HEK293T (cell line): ENCODE measurements at regions of chr14 and their contacts with region 1.

Region 1: DNA sequence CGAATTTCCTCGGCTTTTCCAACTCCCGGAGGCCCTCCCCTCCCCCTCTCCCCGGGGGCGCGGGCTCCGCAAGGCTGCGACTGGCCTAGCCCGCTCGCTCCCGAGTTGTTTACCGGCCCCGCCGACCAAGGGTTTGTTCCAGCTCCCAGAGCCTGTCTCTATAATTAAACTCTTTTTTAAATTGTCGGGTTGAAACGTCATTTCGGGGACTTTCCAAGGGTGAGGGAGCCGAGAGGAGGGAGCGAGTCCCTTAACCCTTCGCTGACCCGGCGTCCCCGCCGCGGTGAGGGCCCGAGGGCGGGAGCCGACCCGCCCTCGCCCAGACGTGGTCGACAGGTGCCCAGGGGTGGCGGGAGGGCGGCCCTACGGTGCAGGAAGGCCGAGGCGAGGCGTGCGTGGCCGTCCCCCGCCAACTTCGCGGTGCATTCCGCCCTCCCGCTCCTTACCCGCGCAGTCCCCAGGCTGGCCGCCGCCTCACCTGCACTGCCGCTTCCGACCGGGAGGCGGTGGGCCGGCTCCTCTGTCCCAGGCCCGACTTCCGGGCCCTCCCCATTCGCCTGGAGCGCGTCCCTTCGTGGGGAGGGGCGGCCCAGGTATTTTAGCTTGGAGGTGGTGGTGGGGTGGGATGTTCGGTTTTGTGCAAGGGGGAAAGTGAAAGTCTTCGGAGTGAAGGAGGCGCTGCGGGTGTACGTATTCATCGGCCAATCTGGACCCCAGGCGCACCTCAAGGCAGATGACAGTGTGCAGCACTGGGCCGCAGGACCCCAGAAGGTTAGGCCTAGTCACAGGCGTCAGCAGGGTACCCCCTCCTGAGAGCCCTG is 2.9 kb upstream of the ZFP36L1 start:
- DNase-seq: peak; percentile 79

Region 2: GRCh38 chr14:68248481-68249255 is 547.1 kb before region 1 on chr14:
- CTCF ChIA-PET with region 1: no interaction called
- POLR2A ChIA-PET with region 1: interaction called, 11 read pairs
- DNase-seq: peak; percentile 53

Region 3: DNA sequence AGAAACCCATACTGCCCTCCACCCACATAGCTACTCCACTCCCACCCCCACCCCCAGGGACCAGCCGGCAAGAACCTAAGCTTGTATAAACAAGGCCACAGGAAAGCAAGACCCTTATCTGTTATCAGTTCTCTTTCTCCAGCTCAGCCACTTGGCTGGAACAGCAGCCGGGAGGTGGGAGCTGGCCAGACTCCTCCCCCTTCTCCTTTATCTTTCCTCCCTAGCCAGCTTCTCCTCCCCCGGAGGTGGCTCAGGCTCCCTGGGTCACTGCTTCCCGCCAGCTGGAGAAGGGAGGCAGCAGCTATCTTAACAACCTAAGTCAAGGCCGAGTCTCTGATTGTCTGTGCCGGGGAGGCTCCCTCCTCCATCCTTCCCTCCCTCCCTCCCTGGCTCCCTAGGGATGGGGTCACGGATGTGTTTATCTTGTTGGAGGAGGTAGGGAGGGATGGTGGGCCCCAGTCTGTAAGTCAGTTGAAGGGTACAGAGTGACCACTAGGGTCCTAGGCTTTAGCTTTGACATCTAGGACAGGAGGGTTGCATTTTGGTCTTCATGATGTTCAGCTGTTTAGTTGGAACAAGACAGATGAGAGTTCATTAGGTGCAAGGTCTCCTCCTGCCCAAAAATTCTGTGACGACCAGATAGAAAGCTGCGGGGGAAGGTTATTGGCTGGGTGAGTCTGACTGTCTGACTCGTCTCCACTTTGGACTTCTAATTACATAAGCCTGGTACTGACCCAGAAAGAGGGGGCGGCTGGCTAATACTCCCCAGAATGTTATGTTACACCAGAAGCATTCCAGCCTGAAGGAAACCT is 32.6 kb before region 1 on chr14:
- CTCF ChIA-PET with region 1: no interaction called
- POLR2A ChIA-PET with region 1: interaction called, 10 read pairs
- DNase-seq: peak; percentile 69

Region 4: GRCh38 chr14:68807148-68807600 is 11.4 kb after region 1 on chr14:
- CTCF ChIA-PET with region 1: interaction called, 3 read pairs
- POLR2A ChIA-PET with region 1: interaction called, 63 read pairs
- DNase-seq: peak; percentile 4

Region 5: DNA sequence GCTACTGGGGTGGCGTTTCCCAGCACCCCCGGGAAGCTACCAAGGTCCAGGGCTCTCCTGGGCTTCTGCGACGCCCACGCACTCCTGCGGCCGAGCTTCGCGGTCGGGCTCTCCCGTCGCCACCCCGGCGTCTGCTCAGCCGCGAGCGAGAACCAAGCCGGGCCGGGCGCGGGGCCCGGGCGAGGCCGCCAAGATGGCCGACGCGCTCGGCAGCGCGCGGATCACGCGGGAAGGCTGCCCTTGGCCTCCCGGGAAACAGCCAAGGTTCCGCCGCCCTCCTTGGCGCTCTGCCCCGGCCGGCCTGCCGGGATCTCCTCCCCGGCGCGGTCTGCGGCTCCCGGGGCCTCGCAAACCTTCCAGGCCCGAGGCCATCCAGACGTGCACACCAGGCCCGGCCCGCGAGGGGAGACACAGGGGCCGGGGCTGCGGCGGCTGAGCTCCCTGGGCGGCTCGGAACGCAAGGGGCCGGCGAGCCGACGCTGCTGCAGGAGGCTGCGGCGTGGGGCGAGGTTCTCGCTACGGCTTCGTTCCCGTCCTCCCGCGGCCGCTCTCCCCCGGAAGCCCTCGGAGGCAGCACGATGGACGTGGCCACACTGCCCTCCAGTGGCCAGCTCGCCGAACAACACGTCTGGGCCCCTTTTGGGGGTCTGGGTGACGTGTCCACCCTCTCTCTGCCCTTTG is 20.6 kb after region 1 on chr14:
- CTCF ChIA-PET with region 1: interaction called, 3 read pairs
- POLR2A ChIA-PET with region 1: interaction called, 63 read pairs
- DNase-seq: peak; percentile 90

Region 6: DNA sequence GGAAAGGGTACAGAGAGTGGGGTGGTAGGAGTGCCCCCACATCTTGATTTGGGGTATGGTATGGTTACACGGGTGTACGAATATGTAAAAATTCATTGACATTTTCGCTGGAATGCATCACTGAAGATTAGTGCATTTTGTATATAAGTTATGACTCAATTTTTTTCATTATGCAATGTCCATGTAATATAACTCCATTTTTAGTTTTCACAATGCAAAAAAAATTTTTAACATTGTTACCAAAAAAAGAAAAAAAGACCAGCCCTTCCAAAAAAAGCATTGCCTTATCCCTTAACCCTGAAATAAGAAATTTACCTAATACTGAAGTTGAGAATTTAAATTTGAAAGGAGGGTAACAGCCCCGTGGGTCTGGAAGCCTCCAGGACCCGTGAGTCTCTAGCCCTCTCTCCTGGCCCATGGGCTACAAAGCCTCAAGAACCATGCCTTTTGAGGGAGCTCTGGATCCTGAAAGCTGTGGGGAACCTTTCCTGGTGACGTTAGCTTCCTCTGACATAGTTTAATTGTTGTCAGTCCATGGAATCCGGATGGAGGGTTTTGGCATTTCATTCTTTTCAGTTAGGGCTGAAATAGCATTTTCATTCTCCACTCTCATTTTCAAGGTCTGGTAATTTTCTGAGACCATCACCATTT is 238.9 kb after region 1 on chr14:
- CTCF ChIA-PET with region 1: no interaction called
- POLR2A ChIA-PET with region 1: no interaction called
- DNase-seq: no peak